ENCODE measurements at regions of chr6 and their contacts with region 1.

Region 1: DNA sequence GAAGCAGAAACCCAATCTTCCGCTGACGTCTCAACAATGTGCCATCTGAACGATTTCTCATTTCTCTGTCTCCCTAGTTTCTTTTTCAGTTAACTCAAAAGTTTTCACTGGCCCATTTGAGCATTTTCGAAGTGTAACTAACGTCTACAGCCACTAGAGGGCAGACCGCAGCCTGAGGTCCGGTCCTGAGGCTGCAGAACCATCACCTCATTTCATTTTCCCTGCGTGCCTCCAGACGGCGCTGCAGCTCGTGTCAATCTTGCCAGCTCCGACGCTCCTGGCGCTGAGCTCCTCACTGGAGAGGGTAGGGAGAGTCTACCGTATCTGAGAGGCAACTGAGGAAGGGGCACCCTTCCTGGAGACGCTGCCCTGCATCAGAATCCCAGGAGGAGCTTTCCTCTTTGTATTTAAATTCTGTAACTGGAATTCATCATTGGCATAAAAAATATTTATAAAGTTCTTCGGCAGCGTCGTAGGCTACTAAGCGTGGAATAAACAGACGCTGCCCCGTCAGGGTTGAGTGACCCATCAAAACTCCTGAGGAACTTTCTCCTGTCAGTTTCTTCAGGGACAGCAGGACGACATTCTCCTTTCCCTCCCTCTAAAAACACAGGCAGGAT is 28.5 kb upstream of the DTNBP1 start:
- DNase-seq: peak; percentile 69 to 72
- H3K4me3 ChIP-seq: no peak overlapping the region
- H3K27ac ChIP-seq: no peak overlapping the region
- H3K4me1 ChIP-seq: no peaks in the 10 kb centered on the region
- H3K27me3 ChIP-seq: peaks cover 28% of the 10 kb centered on the region
- CTCF ChIP-seq: peak; percentile 97

Region 2: DNA sequence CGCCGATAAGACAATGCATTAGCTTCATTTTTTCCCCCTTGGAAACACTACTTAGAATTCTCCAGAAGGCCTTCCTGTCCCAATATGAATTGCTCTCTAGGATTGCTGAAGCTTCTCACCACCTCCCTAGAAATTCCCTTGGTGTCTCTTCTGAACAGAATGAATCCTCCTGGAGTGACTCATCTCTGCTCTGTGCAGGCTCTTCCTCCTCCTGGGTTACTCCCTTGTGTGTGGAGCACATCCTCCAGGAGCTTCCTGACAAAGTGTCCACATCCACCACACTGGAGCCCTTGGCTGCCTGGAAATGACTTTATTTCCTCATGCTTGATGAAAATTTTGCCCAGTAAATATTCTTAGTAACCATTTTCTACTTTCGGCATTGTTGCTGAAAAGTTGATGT is 83.0 kb before region 1 on chr6:
- CTCF ChIA-PET with region 1: no interaction called
- POLR2A ChIA-PET with region 1: no interaction called
- intact Hi-C with region 1: no loop called
- DNase-seq: peak in 1 of 2 experiments; percentile 2
- H3K4me3 ChIP-seq: no peak overlapping the region
- H3K27ac ChIP-seq: peak overlapping the region; percentile 3; the same call in 1 of the 2 replicates
- H3K4me1 ChIP-seq: no peaks in the 10 kb centered on the region
- H3K27me3 ChIP-seq: no peaks in the 10 kb centered on the region
- CTCF ChIP-seq: no peak

Region 3: GRCh38 chr6:15705981-15706380 is 14.6 kb after region 1 on chr6:
- CTCF ChIA-PET with region 1: no interaction called
- POLR2A ChIA-PET with region 1: no interaction called
- intact Hi-C with region 1: no loop called
- DNase-seq: no peak
- H3K4me3 ChIP-seq: no peak overlapping the region
- H3K27ac ChIP-seq: no peak overlapping the region
- H3K4me1 ChIP-seq: no peaks in the 10 kb centered on the region
- H3K27me3 ChIP-seq: peaks cover 85% of the 10 kb centered on the region
- CTCF ChIP-seq: no peak

Region 4: DNA sequence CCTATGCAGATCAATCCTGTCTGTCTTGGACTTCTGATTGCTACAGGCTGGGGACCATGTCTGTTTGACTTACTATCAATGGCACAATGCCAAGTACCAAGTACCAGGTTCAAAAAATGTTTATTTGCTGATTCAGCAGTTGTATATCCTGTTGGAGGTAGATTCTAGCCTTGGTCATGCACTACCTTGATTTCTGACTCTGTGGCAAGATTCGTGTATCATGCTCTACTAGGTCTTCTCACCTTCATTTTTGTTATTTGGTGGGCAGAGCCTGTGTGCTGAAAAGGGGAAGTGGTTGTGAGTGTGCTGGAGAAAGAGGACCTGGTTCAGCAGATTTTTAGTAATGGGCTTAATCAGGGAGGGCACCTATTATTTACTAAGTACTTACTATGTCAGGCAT is 245.1 kb after region 1 on chr6:
- CTCF ChIA-PET with region 1: no interaction called
- POLR2A ChIA-PET with region 1: no interaction called
- intact Hi-C with region 1: no loop called
- DNase-seq: no peak
- H3K4me3 ChIP-seq: no peak overlapping the region
- H3K27ac ChIP-seq: no peak overlapping the region
- H3K4me1 ChIP-seq: no peaks in the 10 kb centered on the region
- H3K27me3 ChIP-seq: peaks cover 21% of the 10 kb centered on the region
- CTCF ChIP-seq: no peak

Region 5: GRCh38 chr6:16183187-16183664 is 491.9 kb after region 1 on chr6:
- CTCF ChIA-PET with region 1: interaction called, 31 read pairs
- POLR2A ChIA-PET with region 1: no interaction called
- intact Hi-C with region 1: loop called (anchors 1 kb)
- DNase-seq: no peak
- H3K4me3 ChIP-seq: no peak overlapping the region
- H3K27ac ChIP-seq: no peak overlapping the region
- H3K4me1 ChIP-seq: no peaks in the 10 kb centered on the region
- H3K27me3 ChIP-seq: peaks cover 53% of the 10 kb centered on the region
- CTCF ChIP-seq: peak; percentile 70

Region 6: GRCh38 chr6:16206595-16207037 is 515.3 kb after region 1 on chr6:
- CTCF ChIA-PET with region 1: interaction called, 7 read pairs
- POLR2A ChIA-PET with region 1: no interaction called
- intact Hi-C with region 1: loop called (anchors 1 kb)
- DNase-seq: peak; percentile 47 to 52
- H3K4me3 ChIP-seq: no peak overlapping the region
- H3K27ac ChIP-seq: no peak overlapping the region
- H3K4me1 ChIP-seq: no peaks in the 10 kb centered on the region
- H3K27me3 ChIP-seq: peaks cover 34% of the 10 kb centered on the region
- CTCF ChIP-seq: peak; percentile 96

Region 7: GRCh38 chr6:16277101-16277981 is 586.0 kb after region 1 on chr6:
- CTCF ChIA-PET with region 1: no interaction called
- POLR2A ChIA-PET with region 1: no interaction called
- intact Hi-C with region 1: loop called (anchors 1 kb)
- DNase-seq: peak; percentile 83 to 88
- H3K4me3 ChIP-seq: peak overlapping the region; percentile 4; the same call in 1 of the 2 replicates
- H3K27ac ChIP-seq: no peak overlapping the region
- H3K4me1 ChIP-seq: peaks cover 11% of the 10 kb centered on the region
- H3K27me3 ChIP-seq: no peaks in the 10 kb centered on the region
- CTCF ChIP-seq: peak; percentile 69

Region 8: GRCh38 chr6:17093686-17094085 is 1402.3 kb after region 1 on chr6:
- CTCF ChIA-PET with region 1: no interaction called
- POLR2A ChIA-PET with region 1: no interaction called
- intact Hi-C with region 1: loop called (anchors 10 kb)
- DNase-seq: peak in 1 of 2 experiments; percentile 23
- H3K4me3 ChIP-seq: no peak overlapping the region
- H3K27ac ChIP-seq: no peak overlapping the region
- H3K4me1 ChIP-seq: 0 out of 2 replicates have a peak, but pooled peaks cover 4% of the 10 kb centered on the region
- H3K27me3 ChIP-seq: no peaks in the 10 kb centered on the region
- CTCF ChIP-seq: peak; percentile 57

Measured in PC-9 (cell line).